ENCODE measurements at regions of chr2 and their contacts with region 1.

Region 1: DNA sequence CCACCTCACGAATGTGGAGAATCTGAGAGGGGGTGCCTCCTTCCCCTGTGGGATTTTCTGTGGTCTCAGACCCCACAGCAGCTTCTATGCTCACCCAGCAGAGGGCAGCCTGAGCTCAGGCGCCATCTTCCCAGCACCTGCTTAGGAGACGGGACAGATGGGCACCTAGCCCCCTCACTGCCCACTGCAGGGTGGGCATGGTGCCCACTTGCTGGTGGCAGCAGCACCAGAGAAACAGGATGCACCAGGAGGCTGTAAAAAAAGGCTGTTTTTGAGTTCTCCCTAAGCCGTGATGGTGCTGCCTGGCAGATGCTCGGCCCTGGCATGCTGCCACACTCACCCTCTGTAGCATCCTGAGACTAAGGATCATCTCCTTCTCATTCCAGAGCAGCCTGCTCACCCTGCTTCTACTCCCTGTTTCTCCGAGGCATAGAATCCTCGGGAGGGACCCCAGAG is 19.1 kb upstream of the SLC20A1 start:
- DNase-seq: peak; percentile 79
- H3K4me3 Mint-ChIP-seq: peak overlapping the region; percentile 46
- H3K27ac Mint-ChIP-seq: peak overlapping the region; percentile 88
- H3K4me1 Mint-ChIP-seq: peaks cover 67% of the 10 kb centered on the region
- H3K27me3 Mint-ChIP-seq: peaks cover 2% of the 10 kb centered on the region

Region 2: GRCh38 chr2:112645310-112646101 is 18.9 kb after region 1 on chr2 and contains the start of gene SLC20A1:
- CTCF ChIA-PET with region 1: interaction called, 77 read pairs
- POLR2A ChIA-PET with region 1: interaction called, 49 read pairs
- intact Hi-C with region 1: loop called (anchors 1 kb)
- DNase-seq: peak; percentile 98
- H3K4me3 Mint-ChIP-seq: peak within 1 kb of the TSS; percentile 97
- H3K27ac Mint-ChIP-seq: peak within 1 kb of the TSS; percentile 87
- H3K4me1 Mint-ChIP-seq: peaks cover 52% of the 10 kb centered on the region
- H3K27me3 Mint-ChIP-seq: no peaks in the 10 kb centered on the region
- total RNA-seq, gene SLC20A1: 88.8 to 91.3 TPM

Region 3: DNA sequence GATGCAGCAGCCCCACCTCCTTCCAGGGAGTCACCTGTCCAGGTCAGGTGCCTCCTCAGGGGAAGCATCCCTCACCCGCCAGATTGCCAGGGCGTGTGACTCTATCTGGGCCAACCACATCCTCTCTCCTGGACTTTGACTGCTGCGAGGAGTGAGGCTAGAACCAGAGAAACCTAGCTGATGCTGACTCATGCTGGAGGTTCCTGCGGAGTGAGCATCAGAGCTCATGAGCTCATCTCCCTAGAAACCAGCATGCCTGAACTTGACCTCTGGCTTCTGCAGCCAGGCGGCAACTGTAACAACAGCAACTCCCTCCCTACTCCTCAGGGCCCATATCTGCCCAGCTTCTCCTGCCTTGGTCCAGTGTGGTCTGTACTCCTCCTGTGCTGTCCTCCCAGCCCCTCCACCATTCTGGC is 65.9 kb after region 1 on chr2:
- CTCF ChIA-PET with region 1: interaction called, 91 read pairs
- POLR2A ChIA-PET with region 1: interaction called, 10 read pairs
- intact Hi-C with region 1: loop called (anchors 1 kb)
- DNase-seq: peak; percentile 87
- H3K4me3 Mint-ChIP-seq: peak overlapping the region; percentile 30
- H3K27ac Mint-ChIP-seq: peak overlapping the region; percentile 84
- H3K4me1 Mint-ChIP-seq: peaks cover 33% of the 10 kb centered on the region
- H3K27me3 Mint-ChIP-seq: no peaks in the 10 kb centered on the region

Region 4: GRCh38 chr2:112884869-112885505 is 258.4 kb after region 1 on chr2:
- CTCF ChIA-PET with region 1: no interaction called
- POLR2A ChIA-PET with region 1: no interaction called
- intact Hi-C with region 1: loop called (anchors 10 kb)
- DNase-seq: peak; percentile 86
- H3K4me3 Mint-ChIP-seq: no peak overlapping the region
- H3K27ac Mint-ChIP-seq: peak overlapping the region; percentile 6
- H3K4me1 Mint-ChIP-seq: peaks cover 27% of the 10 kb centered on the region
- H3K27me3 Mint-ChIP-seq: no peaks in the 10 kb centered on the region

Measured in activated CD4-positive, alpha-beta memory T cell treated with anti-CD3 and anti-CD28 coated beads for 36 hours (primary cell).